HepG2 (cell line): ENCODE measurements at regions of chrX and their contacts with region 1.

Region 1: DNA sequence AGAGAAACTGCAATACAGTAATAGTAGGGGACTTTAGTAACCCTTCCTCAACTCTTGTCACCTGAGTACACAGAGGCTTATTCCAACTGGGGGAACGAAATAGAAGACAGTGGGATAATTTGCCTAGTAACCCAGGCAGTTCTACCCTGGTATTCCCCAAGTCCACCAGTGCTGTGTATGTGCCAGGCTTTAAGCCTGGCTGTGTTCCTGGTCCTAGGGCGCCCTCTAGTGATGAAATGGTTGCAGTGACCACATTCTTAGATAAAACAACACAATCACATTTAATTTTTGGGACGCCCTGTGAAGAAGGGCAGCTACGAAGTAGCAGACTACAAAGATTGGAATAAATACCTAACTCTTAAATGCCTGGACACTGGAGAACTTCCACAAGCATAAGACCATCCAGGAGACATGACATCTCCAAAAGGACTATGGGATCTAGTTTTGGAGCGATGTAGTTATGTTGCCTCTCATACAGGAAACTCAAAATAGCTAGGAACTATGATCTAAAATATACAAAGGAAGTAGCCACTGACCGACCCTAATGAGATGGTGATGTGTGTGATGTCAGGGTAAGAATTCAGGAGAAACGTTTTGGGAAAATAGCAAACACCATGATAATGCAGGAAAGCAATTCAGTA is 288.5 kb upstream of the ZCCHC13 start:
- DNase-seq: peak; percentile 46
- ATAC-seq: peak; percentile 91
- H3K4me3 ChIP-seq: no peak overlapping the region
- H3K27ac ChIP-seq: no peak overlapping the region
- H3K4me1 ChIP-seq: no peaks in the 10 kb centered on the region
- H3K27me3 ChIP-seq: no peaks in the 10 kb centered on the region
- CTCF ChIP-seq: peak; percentile 78
- EP300 ChIP-seq: no peak
- POLR2A ChIP-seq: no peak
- RAD21 ChIP-seq: peak; percentile 63; the same call in 1 of the 2 replicates

Region 2: GRCh38 chrX:73289039-73289438 is 726.5 kb before region 1 on chrX:
- CTCF ChIA-PET with region 1: no interaction called
- POLR2A ChIA-PET with region 1: no interaction called
- in situ Hi-C with region 1: no loop called
- intact Hi-C with region 1: loop called (anchors 5 kb)
- DNase-seq: no peak
- ATAC-seq: no peak
- H3K4me3 ChIP-seq: no peak overlapping the region
- H3K27ac ChIP-seq: no peak overlapping the region
- H3K4me1 ChIP-seq: no peaks in the 10 kb centered on the region
- H3K27me3 ChIP-seq: no peaks in the 10 kb centered on the region
- CTCF ChIP-seq: peak; percentile 43
- EP300 ChIP-seq: no peak
- POLR2A ChIP-seq: no peak
- RAD21 ChIP-seq: no peak

Region 3: DNA sequence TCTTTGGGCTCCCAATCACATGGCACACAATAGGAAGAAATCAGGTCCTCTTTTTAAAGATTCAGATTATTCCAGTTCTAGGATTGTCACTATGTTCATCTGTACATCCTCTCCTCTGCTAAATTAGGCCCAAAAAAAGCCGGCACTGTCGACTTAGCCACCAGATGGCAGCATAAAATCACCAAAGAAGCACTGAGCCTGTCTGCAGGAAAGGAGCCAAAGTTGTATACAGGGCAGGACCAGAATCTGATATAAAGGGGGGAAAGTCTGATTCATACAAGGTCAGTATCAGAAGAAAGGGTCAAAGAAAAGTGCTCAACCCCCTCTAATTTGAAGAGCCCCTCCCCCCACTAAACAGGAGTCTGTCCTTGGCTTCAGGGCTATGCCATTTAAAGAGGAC is 160.0 kb before region 1 on chrX:
- CTCF ChIA-PET with region 1: interaction called, 25 read pairs
- POLR2A ChIA-PET with region 1: no interaction called
- in situ Hi-C with region 1: loop called (anchors 5 kb)
- intact Hi-C with region 1: loop called (anchors 1 kb)
- DNase-seq: peak; percentile 22
- ATAC-seq: peak; percentile 79
- H3K4me3 ChIP-seq: no peak overlapping the region
- H3K27ac ChIP-seq: no peak overlapping the region
- H3K4me1 ChIP-seq: no peaks in the 10 kb centered on the region
- H3K27me3 ChIP-seq: no peaks in the 10 kb centered on the region
- CTCF ChIP-seq: peak; percentile 78
- EP300 ChIP-seq: no peak
- POLR2A ChIP-seq: no peak
- RAD21 ChIP-seq: peak; percentile 57

Region 4: DNA sequence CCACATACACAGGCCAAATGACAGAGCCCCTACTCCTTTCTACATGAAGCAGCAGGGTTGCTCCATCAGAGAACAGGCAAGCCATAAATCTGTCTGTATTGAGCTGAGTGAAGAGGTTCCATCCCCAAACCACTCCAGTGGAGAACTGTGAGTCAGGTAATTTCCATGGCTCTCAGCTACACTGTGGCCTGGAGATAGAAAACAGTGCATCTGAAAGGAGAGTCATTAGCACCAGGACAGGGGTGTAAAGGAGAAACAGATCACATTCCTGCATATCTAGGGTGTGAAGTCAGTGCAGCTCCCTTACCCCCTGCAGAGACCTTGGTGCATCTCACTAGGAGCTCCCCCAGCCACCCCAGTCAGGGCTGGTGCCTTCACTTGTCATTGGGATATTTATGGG is 137.8 kb before region 1 on chrX:
- CTCF ChIA-PET with region 1: no interaction called
- POLR2A ChIA-PET with region 1: no interaction called
- in situ Hi-C with region 1: no loop called
- intact Hi-C with region 1: no loop called
- DNase-seq: no peak
- ATAC-seq: no peak
- H3K4me3 ChIP-seq: no peak overlapping the region
- H3K27ac ChIP-seq: no peak overlapping the region
- H3K4me1 ChIP-seq: no peaks in the 10 kb centered on the region
- H3K27me3 ChIP-seq: no peaks in the 10 kb centered on the region
- CTCF ChIP-seq: no peak
- EP300 ChIP-seq: no peak
- POLR2A ChIP-seq: no peak
- RAD21 ChIP-seq: no peak

Region 5: DNA sequence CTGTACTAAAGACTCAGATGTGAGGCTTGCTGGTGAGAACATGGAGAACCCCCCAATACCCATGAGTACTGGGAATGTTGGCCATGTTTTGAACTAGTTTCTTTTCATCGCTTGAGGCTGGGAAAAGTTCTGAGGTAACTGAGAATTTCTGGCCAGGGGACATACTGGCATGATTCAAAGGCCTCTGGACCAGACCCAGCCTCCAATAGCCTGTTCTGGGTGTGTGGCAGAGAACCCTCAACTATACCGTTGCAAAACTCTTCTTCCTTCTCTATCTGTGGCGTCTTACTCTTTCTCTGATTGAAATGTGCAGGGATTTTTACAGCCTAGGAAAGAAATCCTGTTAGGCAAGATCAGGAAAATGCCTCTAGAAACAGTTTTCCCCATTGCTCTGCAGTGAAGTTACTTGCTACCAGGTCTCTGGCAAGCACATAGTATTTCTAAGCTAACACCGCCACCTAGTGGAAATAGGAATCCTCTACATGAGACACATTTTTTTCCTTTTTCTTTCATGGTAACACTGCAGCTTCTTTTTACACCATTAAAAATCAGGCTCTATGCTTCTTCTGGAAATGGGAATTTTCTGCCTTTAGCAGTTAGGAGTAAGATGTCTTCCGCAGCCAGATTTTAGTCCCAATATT is 117.8 kb after region 1 on chrX:
- CTCF ChIA-PET with region 1: interaction called, 5 read pairs
- POLR2A ChIA-PET with region 1: no interaction called
- in situ Hi-C with region 1: loop called (anchors 25 kb)
- intact Hi-C with region 1: no loop called
- DNase-seq: peak; percentile 46
- ATAC-seq: peak; percentile 74
- H3K4me3 ChIP-seq: no peak overlapping the region
- H3K27ac ChIP-seq: no peak overlapping the region
- H3K4me1 ChIP-seq: no peaks in the 10 kb centered on the region
- H3K27me3 ChIP-seq: no peaks in the 10 kb centered on the region
- CTCF ChIP-seq: peak; percentile 71
- EP300 ChIP-seq: no peak
- POLR2A ChIP-seq: no peak
- RAD21 ChIP-seq: no peak